ENCODE measurements at regions of chr9 and their contacts with region 1.

Region 1: GRCh38 chr9:73441890-73442818 is 290.5 kb downstream of the ANXA1 start:
- DNase-seq: no peak
- ATAC-seq: no peak
- H3K4me3 ChIP-seq: no peak overlapping the region
- H3K27ac ChIP-seq: no peak overlapping the region
- H3K4me1 ChIP-seq: no peaks in the 10 kb centered on the region
- H3K27me3 ChIP-seq: no peaks in the 10 kb centered on the region

Region 2: DNA sequence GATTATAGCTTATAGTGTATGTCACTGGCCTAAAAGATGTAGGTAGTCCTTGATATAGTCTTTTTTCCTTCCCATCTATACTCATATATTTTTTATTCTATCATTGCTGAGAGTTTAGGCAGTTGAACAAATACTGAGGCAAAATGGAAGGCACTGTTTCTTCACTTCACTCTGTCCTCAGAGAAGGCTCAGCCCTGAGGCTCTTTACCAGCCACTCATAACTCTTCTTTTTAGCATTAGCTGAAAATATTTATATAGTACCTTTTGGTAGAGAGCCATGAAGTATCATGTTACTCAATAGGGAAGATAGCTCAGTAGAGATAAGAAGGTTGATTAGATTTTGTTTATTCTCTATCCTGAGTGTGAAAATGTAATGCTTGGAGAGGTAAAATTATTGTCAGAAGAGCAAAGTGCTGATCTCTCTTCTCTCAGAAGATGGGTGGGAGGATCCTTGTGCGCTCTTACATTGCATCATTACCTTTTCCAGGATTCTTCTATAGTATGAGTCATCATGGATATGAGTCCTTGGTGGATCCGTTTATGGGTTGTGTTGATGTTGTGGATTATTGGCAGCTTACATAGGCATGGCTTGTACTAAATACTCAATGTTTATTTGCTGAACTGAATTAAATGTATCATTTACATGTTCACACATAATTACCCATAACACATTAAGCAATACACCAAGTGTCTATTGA is 202.4 kb before region 1 on chr9:
- intact Hi-C with region 1: no loop called
- DNase-seq: no peak
- ATAC-seq: no peak
- H3K4me3 ChIP-seq: no peak overlapping the region
- H3K27ac ChIP-seq: no peak overlapping the region
- H3K4me1 ChIP-seq: no peaks in the 10 kb centered on the region
- H3K27me3 ChIP-seq: no peaks in the 10 kb centered on the region

Region 3: DNA sequence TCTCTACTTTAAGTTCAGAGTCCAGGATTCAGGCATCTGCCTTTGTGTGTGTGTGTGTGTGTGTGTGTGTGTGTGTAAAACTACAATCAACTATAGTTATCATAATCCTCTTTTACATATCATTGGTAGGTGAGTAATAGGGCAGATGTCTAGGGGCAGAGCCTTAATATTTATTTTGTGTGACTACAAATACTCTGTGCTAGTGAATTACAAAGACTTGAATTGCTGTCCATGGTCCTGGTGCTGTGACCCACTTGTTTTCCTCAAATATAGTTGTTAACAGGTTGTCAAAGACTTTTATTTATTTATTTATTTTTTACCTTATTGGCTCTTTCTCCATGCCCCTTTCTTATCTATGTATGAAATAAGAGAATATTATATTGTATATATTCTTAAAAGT is 93.7 kb before region 1 on chr9:
- intact Hi-C with region 1: no loop called
- DNase-seq: no peak
- ATAC-seq: no peak
- H3K4me3 ChIP-seq: no peak overlapping the region
- H3K27ac ChIP-seq: no peak overlapping the region
- H3K4me1 ChIP-seq: no peaks in the 10 kb centered on the region
- H3K27me3 ChIP-seq: no peaks in the 10 kb centered on the region

Region 4: DNA sequence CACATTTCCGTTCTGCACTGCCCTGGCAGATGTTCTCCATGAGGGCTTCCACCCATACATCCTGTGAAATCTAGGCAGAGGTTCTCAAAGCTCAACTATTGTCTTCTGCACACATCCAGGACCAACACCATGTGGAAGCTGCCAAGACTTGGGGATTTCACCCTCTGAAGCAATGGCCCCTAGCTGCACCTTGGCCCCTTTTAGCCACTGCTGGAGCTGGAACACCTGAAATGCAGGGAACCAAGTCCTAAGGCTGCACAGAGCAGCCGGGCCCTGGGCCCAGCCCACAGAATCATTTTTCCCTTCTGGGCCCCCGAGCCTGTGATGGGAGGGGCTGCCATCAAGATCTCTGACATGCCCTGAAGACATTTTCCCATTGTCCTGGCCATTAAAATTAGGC is 61.7 kb before region 1 on chr9:
- intact Hi-C with region 1: loop called in 1 of 2 experiments (anchors 10 kb)
- DNase-seq: no peak
- ATAC-seq: no peak
- H3K4me3 ChIP-seq: no peak overlapping the region
- H3K27ac ChIP-seq: no peak overlapping the region
- H3K4me1 ChIP-seq: no peaks in the 10 kb centered on the region
- H3K27me3 ChIP-seq: no peaks in the 10 kb centered on the region

Region 5: GRCh38 chr9:73402081-73403028 is 39.8 kb before region 1 on chr9:
- intact Hi-C with region 1: no loop called
- DNase-seq: no peak
- ATAC-seq: no peak
- H3K4me3 ChIP-seq: no peak overlapping the region
- H3K27ac ChIP-seq: no peak overlapping the region
- H3K4me1 ChIP-seq: no peaks in the 10 kb centered on the region
- H3K27me3 ChIP-seq: no peaks in the 10 kb centered on the region